ENCODE measurements at regions of chr15 and their contacts with region 1.

Region 1: GRCh38 chr15:63323798-63324563 is 46.6 kb downstream of the APH1B start:
- DNase-seq: peak in 9 of 10 donors; percentile 36 to 77 (median 61)
- H3K4me3 ChIP-seq: no peak overlapping the region
- H3K27ac ChIP-seq: peak overlapping the region in 21 of 59 donors; percentile 2 to 66 (median 38)
- H3K27me3 ChIP-seq: no peaks in the 10 kb centered on the region
- CTCF ChIP-seq: no peak

Region 2: GRCh38 chr15:63372018-63372705 is 48.2 kb after region 1 on chr15:
- intact Hi-C with region 1: loop called in 1 of 2 experiments (anchors 2 kb)
- DNase-seq: peak in 7 of 10 donors; percentile 50 to 78 (median 58)
- H3K4me3 ChIP-seq: no peak overlapping the region
- H3K27ac ChIP-seq: peak overlapping the region in 18 of 59 donors; percentile 6 to 72 (median 46)
- H3K27me3 ChIP-seq: no peaks in the 10 kb centered on the region
- CTCF ChIP-seq: no peak

Region 3: GRCh38 chr15:63531586-63531985 is 207.6 kb after region 1 on chr15:
- intact Hi-C with region 1: no loop called
- DNase-seq: no peak
- H3K4me3 ChIP-seq: no peak overlapping the region
- H3K27ac ChIP-seq: no peak overlapping the region
- H3K27me3 ChIP-seq: no peaks in the 10 kb centered on the region
- CTCF ChIP-seq: no peak

Measured in dorsolateral prefrontal cortex (tissue), 120 donors.